Activated naive CD8-positive, alpha-beta T cell treated with anti-CD3 and anti-CD28 coated beads, Interleukin-2, amount 10 ng/mL, durations not matched to agents 7 days and 5 days (primary cell): ENCODE measurements at regions of chr1 and their contacts with region 1.

Region 1: GRCh38 chr1:46603858-46604549 is at the start of gene MKNK1:
- DNase-seq: peak; percentile 98
- ATAC-seq: peak; percentile 89
- H3K4me3 Mint-ChIP-seq: peak within 1 kb of the TSS; percentile 90
- H3K27ac Mint-ChIP-seq: peak within 1 kb of the TSS; percentile 81
- H3K4me1 Mint-ChIP-seq: peaks cover 52% of the 10 kb centered on the region
- H3K27me3 Mint-ChIP-seq: no peaks in the 10 kb centered on the region
- total RNA-seq, gene MKNK1: 65.4 to 70.2 TPM

Region 2: DNA sequence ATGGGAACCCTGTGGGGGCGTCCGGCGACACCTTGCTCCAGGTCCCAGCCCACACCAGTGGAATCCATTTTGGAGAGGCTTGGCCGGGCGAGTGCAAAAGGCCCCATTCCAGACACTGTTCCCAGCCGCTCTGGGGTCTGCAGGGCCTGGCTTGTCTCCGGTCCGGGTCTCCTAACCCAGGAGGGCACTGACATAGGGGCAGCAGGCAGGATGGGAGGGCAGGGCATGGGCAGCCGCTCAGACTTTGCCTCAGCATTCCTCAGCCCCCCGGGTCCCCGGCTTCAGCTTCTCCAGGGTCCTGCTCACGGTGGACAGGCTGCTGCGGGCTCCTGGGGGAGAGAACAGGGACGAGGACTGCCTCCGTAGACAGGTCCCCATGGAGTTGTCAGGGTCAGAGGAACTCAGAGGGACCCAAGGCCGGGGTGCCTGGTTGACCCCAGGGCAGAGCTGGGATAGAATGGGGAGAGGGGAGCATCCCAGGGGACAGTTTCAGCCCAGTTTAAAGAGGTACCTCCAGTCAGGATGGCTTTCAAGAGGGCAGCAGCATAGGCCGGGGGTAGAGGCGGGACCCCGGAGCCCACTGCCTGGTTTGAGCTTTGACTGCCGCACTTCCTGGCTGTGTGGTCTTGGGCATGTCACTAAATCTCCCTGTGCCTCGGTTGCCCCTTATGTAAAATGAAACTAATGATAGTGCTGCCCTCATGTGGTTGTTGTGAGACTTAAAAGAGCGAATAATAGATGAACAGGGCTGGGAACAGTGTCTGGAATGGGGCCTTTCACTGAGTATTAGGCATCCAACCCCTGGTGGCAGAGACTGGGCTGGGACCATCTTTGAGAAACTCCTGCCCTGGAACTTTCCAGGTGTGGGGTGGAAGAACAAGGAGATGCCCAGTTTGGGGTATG is 56.3 kb before region 1 on chr1:
- POLR2A ChIA-PET with region 1: interaction called, 22 read pairs
- DNase-seq: no peak
- ATAC-seq: no peak
- H3K4me3 Mint-ChIP-seq: no peak overlapping the region
- H3K27ac Mint-ChIP-seq: no peak overlapping the region
- H3K4me1 Mint-ChIP-seq: peaks cover 22% of the 10 kb centered on the region
- H3K27me3 Mint-ChIP-seq: peaks cover 38% of the 10 kb centered on the region

Region 3: GRCh38 chr1:46569116-46569515 is 34.9 kb before region 1 on chr1:
- POLR2A ChIA-PET with region 1: no interaction called
- DNase-seq: no peak
- ATAC-seq: no peak
- H3K4me3 Mint-ChIP-seq: no peak overlapping the region
- H3K27ac Mint-ChIP-seq: no peak overlapping the region
- H3K4me1 Mint-ChIP-seq: peaks cover 1% of the 10 kb centered on the region
- H3K27me3 Mint-ChIP-seq: no peaks in the 10 kb centered on the region

Region 4: GRCh38 chr1:46581681-46582455 is 22.1 kb before region 1 on chr1:
- POLR2A ChIA-PET with region 1: interaction called, 70 read pairs
- DNase-seq: peak; percentile 53
- ATAC-seq: peak; percentile 96
- H3K4me3 Mint-ChIP-seq: peak overlapping the region; percentile 75
- H3K27ac Mint-ChIP-seq: peak overlapping the region; percentile 90
- H3K4me1 Mint-ChIP-seq: peaks cover 39% of the 10 kb centered on the region
- H3K27me3 Mint-ChIP-seq: no peaks in the 10 kb centered on the region

Region 5: DNA sequence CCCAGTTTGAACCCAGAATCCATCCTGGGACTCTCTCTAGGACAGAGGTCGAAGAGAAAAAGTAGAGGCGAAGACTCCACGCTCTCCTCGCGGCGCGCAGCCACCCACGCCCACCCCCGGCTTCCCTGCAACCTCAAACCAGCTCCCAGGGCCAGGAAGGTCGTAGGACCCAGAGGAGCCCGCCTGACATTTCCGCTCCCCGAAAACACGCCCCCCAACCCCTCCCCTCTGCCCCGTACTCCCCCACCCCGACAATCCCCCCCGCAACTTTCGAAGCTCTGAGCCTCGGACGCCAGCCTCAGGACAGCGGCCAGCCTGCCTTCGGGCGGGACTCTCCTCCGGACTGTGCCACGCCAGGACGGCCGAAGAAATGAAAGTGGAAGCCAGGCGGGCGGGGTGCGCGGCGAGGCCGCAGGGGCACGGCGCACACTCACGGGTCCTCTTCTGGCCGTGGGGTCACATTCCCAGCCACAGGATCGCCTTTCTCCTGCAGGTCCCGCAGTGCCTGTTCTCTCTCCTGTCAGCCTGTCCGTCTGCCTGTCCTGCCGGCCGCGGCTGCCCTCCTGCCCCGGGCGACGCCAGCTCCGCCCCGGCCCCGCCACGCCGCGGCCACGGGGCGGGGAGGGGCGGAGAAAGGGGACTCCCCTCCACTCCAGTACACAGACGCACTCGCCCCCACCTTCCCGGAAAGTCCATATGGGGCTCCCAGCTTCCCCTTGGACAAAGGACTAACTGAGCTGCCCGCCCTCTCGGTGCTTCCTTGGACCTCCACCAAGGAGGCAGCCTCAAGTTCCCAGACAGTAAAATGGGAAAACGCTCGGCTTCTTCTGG is 12.5 kb after region 1 on chr1 and contains the start of gene MOB3C:
- POLR2A ChIA-PET with region 1: interaction called, 91 read pairs
- DNase-seq: peak; percentile 75
- ATAC-seq: peak; percentile 72
- H3K4me3 Mint-ChIP-seq: peak within 1 kb of the TSS; percentile 95
- H3K27ac Mint-ChIP-seq: peak within 1 kb of the TSS; percentile 90
- H3K4me1 Mint-ChIP-seq: peaks cover 51% of the 10 kb centered on the region
- H3K27me3 Mint-ChIP-seq: peaks cover 2% of the 10 kb centered on the region
- total RNA-seq, gene MOB3C: 21.0 to 23.8 TPM

Region 6: DNA sequence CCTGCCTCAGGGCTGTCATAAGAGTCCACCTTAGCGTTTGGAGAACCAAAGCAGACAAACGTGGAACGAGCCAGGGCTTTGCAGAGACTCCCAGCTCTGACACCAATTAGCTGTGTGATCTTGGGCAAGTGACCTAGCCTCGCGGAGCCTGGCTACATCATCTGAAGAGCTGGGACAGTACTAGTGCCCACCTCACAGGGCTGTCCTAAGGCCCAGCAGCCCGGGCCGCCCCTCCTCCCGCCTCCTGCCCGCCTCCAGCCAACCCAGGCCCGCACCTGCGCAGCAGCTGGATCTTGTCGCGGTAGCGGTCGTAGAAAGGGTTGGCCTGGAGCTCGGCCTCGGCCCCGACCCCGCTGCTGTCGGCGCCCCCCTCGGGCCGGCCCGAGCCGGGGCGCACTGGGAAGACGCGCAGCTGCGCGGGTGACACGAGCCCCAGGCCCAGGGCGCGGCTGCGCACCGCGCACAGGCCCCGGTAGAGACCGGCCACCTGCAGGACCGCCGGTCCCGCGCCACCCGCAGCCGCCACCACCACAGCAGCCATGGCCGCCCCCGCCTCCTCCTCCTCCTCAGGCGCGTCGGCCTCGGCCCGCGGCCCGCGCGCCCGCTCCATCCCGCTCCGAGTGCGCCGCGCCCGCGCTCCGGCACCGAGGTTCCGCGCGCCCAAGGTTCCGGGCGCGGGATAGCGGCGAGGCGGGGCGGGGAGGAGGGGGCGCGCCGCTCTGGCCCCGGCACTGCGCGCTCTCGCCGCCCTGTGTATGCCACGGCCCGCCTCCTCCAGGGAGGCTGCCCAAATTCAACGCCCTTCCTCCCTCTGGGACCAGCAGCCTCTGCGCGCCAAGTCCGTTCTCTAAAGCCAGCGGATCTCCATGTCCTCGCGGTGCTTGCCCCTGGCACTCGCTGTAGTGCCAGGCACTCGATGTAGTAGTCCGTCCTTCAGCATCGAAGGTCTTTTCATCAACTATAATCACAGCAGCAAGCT is 64.1 kb after region 1 on chr1 and contains the start of gene ATPAF1:
- POLR2A ChIA-PET with region 1: interaction called, 13 read pairs
- DNase-seq: peak; percentile 78
- ATAC-seq: peak; percentile 84
- H3K4me3 Mint-ChIP-seq: peak within 1 kb of the TSS; percentile 93
- H3K27ac Mint-ChIP-seq: peak within 1 kb of the TSS; percentile 67
- H3K4me1 Mint-ChIP-seq: peaks cover 15% of the 10 kb centered on the region
- H3K27me3 Mint-ChIP-seq: no peaks in the 10 kb centered on the region
- total RNA-seq, gene ATPAF1: 43.3 to 45.4 TPM

Region 7: GRCh38 chr1:46675549-46676314 is 71.7 kb after region 1 on chr1:
- POLR2A ChIA-PET with region 1: interaction called, 15 read pairs
- DNase-seq: no peak
- ATAC-seq: peak; percentile 80
- H3K4me3 Mint-ChIP-seq: peak overlapping the region; percentile 66
- H3K27ac Mint-ChIP-seq: peak overlapping the region; percentile 97
- H3K4me1 Mint-ChIP-seq: peaks cover 31% of the 10 kb centered on the region
- H3K27me3 Mint-ChIP-seq: no peaks in the 10 kb centered on the region